Heart right ventricle (tissue), 16 donors: ENCODE measurements at regions of chr2 and their contacts with region 1.

Region 1: DNA sequence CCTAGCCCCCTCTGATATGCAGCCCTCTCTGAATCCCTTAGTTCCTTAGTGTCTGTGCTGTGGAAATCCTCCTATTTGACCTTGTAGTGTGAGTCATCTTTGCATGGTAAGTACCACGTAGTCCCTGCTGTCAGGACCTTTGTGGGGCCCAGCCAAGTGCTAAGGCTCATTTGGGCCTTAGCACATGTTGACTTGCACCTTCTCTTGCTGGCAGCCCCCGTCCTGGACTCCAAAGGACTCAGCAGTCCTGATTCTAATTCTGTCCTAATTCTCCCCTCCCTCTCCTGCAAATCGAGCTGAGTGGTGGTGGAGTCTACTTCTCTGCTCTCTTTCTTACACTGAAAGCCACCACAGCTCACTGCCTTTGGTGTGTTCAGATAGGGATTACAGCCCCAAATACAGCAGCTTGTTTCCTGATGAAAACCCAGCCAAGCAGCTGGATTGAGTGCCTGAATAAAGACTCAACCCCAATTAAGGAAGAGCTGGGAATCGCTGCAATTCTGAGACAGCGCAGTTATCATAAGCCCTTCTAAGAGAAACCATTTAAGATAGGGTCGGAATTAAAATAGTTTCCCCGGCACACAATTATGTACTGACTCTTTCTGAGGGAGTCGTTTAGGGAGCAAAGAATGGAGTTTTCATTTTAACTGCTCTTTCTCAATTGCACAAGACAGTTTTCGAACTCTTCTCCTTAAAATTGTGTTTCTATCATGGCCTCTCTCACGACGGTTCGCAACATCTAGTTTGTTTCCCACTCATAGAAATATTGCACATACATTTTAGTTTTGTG is 215.6 kb upstream of the TNP1 start:
- DNase-seq: peak; percentile 42 to 68
- ATAC-seq: peak; percentile 70 to 94 (median 85)
- H3K4me3 ChIP-seq: no peak overlapping the region
- H3K27ac ChIP-seq: peak overlapping the region in 9 of 10 donors; percentile 60 to 84 (median 80)
- H3K4me1 ChIP-seq: peaks cover 7 to 37% (median 21%) of the 10 kb centered on the region in 9 donors
- H3K27me3 ChIP-seq: no peaks in the 10 kb centered on the region
- CTCF ChIP-seq: no peak

Region 2: GRCh38 chr2:216777650-216778273 is 297.7 kb before region 1 on chr2:
- intact Hi-C with region 1: no loop called
- DNase-seq: no peak
- ATAC-seq: no peak
- H3K4me3 ChIP-seq: no peak overlapping the region
- H3K27ac ChIP-seq: no peak overlapping the region
- H3K4me1 ChIP-seq: peaks cover 16 to 41% (median 24%) of the 10 kb centered on the region in 9 donors
- H3K27me3 ChIP-seq: no peaks in the 10 kb centered on the region
- CTCF ChIP-seq: peak; percentile 16 to 64 (median 45)

Region 3: DNA sequence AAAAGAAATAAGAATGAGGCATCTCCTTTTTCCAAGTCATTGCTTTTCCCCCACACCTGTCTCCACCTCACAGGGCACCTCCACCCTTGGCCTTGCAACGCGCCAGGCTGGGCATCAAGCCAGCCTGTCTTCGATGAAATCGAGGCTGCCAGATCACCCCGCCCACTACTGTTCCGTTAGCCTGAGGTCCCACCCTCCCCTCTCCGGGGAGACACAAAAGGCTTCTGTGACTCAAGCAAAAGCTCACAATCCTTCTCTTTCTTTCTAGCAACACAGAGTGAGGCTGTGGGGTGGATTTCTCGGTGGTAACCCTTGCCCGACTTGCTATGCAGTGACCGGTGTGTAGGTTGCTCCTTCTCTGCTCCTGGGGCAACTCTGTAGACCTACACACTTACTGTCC is 225.5 kb before region 1 on chr2:
- intact Hi-C with region 1: loop called in 1 of 10 experiments (anchors 10 kb)
- DNase-seq: peak; percentile 70 to 75
- ATAC-seq: peak; percentile 47 to 92 (median 89)
- H3K4me3 ChIP-seq: no peak overlapping the region
- H3K27ac ChIP-seq: peak overlapping the region in 1 of 10 donors; percentile 40
- H3K4me1 ChIP-seq: peaks cover 2 to 29% (median 17%) of the 10 kb centered on the region in 9 donors
- H3K27me3 ChIP-seq: no peaks in the 10 kb centered on the region
- CTCF ChIP-seq: no peak

Region 4: GRCh38 chr2:216989340-216990129 is 85.9 kb before region 1 on chr2:
- intact Hi-C with region 1: loop called in 1 of 10 experiments (anchors 5 kb)
- DNase-seq: no peak
- ATAC-seq: peak in 3 of 8 donors; percentile 23 to 53 (median 26)
- H3K4me3 ChIP-seq: no peak overlapping the region
- H3K27ac ChIP-seq: no peak overlapping the region
- H3K4me1 ChIP-seq: peaks cover 0 to 37% (median 8%) of the 10 kb centered on the region in 9 donors
- H3K27me3 ChIP-seq: no peaks in the 10 kb centered on the region
- CTCF ChIP-seq: peak in 4 of 9 donors; percentile 9 to 27 (median 25)

Region 5: DNA sequence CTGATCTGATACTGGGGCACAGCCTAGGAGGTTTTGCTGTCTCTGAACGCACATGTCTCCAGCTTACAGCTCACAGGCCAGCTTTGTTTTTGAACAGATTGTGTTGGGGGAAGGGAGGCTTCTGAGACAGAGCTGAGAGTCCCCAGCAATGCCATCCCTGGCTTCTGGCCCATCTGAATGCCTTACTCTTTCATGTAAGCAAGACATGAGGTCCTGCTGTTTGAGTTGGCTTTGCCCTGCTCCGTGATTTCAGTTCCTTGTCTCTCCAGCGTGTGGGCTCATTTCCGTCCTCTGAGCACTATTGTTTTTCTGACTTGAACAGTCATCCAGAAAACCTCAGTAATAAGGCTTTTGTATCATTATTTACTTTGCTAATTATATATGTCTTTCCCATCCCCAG is 20.7 kb before region 1 on chr2:
- intact Hi-C with region 1: no loop called
- DNase-seq: peak in 1 of 2 donors; percentile 29
- ATAC-seq: peak in 3 of 8 donors; percentile 12 to 36 (median 33)
- H3K4me3 ChIP-seq: no peak overlapping the region
- H3K27ac ChIP-seq: peak overlapping the region in 3 of 10 donors; percentile 32 to 47 (median 37)
- H3K4me1 ChIP-seq: peaks cover 2 to 43% (median 19%) of the 10 kb centered on the region in 9 donors
- H3K27me3 ChIP-seq: no peaks in the 10 kb centered on the region
- CTCF ChIP-seq: no peak